PC-3 (cell line): ENCODE measurements at regions of chr1 and their contacts with region 1.

Region 1: DNA sequence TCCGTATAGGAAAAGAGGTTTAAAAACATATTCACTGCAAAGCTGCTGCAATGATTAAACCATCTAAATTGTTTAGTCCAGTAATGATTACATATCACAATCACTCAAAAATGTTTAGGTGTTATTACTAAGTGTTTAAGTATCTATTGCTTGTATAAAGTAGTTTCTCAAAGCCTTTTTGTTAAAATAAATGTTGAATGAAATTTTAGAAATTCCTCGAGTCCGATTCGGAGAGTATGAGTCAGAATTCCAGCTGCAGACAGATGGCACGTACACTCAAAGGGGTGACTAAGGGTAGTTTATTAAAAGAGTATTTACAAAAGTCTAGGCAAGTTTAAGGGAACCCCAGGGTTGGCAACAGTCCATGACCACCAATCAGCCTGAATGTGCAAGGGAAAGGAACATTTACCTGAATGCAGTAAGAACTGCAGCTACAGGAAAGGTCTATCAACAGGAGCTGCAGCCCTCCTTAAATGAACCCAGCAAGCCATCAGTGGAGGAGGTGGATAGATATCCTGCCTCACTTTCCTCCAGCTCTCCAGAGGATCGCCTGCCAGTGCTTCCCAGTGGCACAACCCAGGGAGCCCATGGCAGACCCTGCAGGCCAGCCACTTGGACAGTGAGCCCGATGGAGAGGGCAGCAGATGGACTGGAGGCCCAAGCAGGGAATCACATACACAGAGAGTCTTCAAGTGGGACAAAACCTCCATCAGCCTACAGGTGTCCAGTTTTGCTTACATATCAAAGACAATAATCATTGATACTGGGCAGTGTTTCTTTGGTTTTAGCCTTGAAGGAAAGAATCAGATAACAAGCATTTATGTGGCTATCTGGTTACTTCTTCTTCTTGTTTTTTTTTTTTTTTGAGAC is 92.1 kb upstream of the SLC44A3 start:
- DNase-seq: peak; percentile 94
- ATAC-seq: peak; percentile 82
- H3K4me3 ChIP-seq: peak overlapping the region; percentile 41; the same call in 1 of the 2 replicates
- H3K27ac ChIP-seq: peak overlapping the region; percentile 25; the same call in 1 of the 2 replicates
- H3K4me1 ChIP-seq: peaks cover 30% of the 10 kb centered on the region
- H3K27me3 ChIP-seq: no peaks in the 10 kb centered on the region
- CTCF ChIP-seq: no peak

Region 2: GRCh38 chr1:94608142-94608851 is 119.8 kb before region 1 on chr1:
- CTCF ChIA-PET with region 1: no interaction called
- POLR2A ChIA-PET with region 1: no interaction called
- intact Hi-C with region 1: loop called (anchors 5 kb)
- DNase-seq: peak; percentile 70
- ATAC-seq: no peak
- H3K4me3 ChIP-seq: no peak overlapping the region
- H3K27ac ChIP-seq: no peak overlapping the region
- H3K4me1 ChIP-seq: peaks cover 64% of the 10 kb centered on the region
- H3K27me3 ChIP-seq: no peaks in the 10 kb centered on the region
- CTCF ChIP-seq: no peak

Region 3: DNA sequence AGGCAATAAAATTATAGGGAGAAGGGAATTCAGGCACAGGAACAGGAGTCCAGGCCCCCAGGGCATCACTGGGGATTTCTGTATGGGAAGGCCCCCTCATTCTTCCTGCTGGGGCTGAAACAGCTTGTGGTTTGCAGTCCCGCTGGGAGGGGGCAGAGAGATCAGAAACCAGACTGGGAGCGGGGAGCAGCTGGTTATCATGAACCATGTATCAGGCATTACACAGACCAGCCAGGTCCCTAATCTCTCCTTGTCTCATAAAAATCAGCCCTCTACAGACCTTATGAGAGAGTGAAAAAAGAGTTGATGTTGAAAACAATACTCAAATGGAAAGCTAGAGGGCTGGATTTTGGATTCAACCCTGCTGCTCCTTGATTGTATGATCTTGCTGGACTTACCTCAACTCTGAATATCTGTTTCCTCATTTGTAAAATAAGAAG is 93.1 kb before region 1 on chr1:
- CTCF ChIA-PET with region 1: no interaction called
- POLR2A ChIA-PET with region 1: no interaction called
- intact Hi-C with region 1: no loop called
- DNase-seq: no peak
- ATAC-seq: no peak; the same call in 1 of the 2 replicates
- H3K4me3 ChIP-seq: no peak overlapping the region
- H3K27ac ChIP-seq: no peak overlapping the region
- H3K4me1 ChIP-seq: no peaks in the 10 kb centered on the region
- H3K27me3 ChIP-seq: no peaks in the 10 kb centered on the region
- CTCF ChIP-seq: no peak

Region 4: GRCh38 chr1:94707321-94708298 is 20.5 kb before region 1 on chr1:
- CTCF ChIA-PET with region 1: no interaction called
- POLR2A ChIA-PET with region 1: no interaction called
- intact Hi-C with region 1: loop called (anchors 2 kb)
- DNase-seq: peak; percentile 33
- ATAC-seq: peak; percentile 41
- H3K4me3 ChIP-seq: no peak overlapping the region
- H3K27ac ChIP-seq: no peak overlapping the region
- H3K4me1 ChIP-seq: peaks cover 13% of the 10 kb centered on the region
- H3K27me3 ChIP-seq: no peaks in the 10 kb centered on the region
- CTCF ChIP-seq: no peak

Region 5: GRCh38 chr1:94792473-94793295 is 64.6 kb after region 1 on chr1:
- CTCF ChIA-PET with region 1: no interaction called
- POLR2A ChIA-PET with region 1: no interaction called
- intact Hi-C with region 1: loop called (anchors 5 kb)
- DNase-seq: peak; percentile 72
- ATAC-seq: peak; percentile 96
- H3K4me3 ChIP-seq: no peak overlapping the region
- H3K27ac ChIP-seq: peak overlapping the region; percentile 10; the same call in 1 of the 2 replicates
- H3K4me1 ChIP-seq: peaks cover 19% of the 10 kb centered on the region
- H3K27me3 ChIP-seq: no peaks in the 10 kb centered on the region
- CTCF ChIP-seq: peak; percentile 36; the same call in 1 of the 2 replicates